Activated CD4-positive, alpha-beta memory T cell treated with anti-CD3 and anti-CD28 coated beads, Interleukin-2, amount 10 ng/mL, durations not matched to agents 7 days and 5 days (primary cell): ENCODE measurements at regions of chr19 and their contacts with region 1.

Region 1: DNA sequence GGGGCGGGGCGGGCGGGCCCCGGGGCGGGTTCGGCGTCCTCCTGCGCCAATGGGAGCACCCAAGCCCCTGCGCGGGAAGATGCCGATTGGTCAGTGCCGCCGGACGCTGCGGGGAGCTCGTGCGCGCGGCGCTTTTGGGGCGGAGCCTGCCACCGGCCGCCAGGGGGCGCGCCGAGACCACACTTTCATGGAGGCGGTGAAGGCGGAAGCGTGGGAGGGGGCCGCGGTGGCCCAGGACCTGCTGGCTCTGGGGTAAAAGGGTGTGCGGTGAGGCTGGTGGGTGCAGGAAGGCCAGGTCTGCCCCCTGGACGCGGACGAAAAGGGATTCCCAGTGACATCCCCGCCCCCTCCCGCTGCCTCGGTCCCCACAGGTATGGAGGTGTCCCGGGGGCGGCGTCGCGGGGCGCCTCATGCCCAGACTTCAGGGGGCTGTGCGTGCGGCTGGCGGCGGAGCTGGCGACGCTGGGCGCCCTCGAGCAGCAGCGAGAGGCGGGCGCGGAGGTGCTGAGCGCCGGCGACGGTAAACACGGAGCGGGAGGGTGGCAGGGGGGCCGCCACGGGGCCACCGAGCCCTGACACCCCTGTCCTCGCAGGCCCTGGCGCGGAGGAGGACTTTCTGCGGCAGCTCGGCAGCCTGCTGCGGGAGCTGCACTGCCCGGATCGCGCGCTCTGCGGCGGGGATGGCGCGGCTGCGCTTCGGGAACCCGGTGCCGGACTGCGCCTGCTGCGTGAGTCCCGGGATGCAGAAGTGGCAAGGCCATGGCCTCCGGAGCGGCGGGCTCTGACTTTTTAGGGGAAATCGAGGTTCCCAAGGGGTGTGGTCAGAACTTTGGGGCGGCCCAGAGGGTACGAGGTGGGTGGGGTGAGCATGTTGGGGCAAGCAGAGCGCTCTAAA is at the start of gene FAM98C:
- DNase-seq: peak; percentile 98
- H3K4me3 Mint-ChIP-seq: peak within 1 kb of the TSS; percentile 93
- H3K27ac Mint-ChIP-seq: peak within 1 kb of the TSS; percentile 92
- H3K4me1 Mint-ChIP-seq: peaks cover 26% of the 10 kb centered on the region
- H3K27me3 Mint-ChIP-seq: peaks cover 6% of the 10 kb centered on the region
- total RNA-seq, gene FAM98C: 34.7 to 36.5 TPM

Region 2: GRCh38 chr19:38304866-38305429 is 98.3 kb before region 1 on chr19:
- CTCF ChIA-PET with region 1: no interaction called
- POLR2A ChIA-PET with region 1: no interaction called
- DNase-seq: no peak
- H3K4me3 Mint-ChIP-seq: no peak overlapping the region
- H3K27ac Mint-ChIP-seq: no peak overlapping the region
- H3K4me1 Mint-ChIP-seq: peaks cover 4% of the 10 kb centered on the region
- H3K27me3 Mint-ChIP-seq: no peaks in the 10 kb centered on the region

Region 3: DNA sequence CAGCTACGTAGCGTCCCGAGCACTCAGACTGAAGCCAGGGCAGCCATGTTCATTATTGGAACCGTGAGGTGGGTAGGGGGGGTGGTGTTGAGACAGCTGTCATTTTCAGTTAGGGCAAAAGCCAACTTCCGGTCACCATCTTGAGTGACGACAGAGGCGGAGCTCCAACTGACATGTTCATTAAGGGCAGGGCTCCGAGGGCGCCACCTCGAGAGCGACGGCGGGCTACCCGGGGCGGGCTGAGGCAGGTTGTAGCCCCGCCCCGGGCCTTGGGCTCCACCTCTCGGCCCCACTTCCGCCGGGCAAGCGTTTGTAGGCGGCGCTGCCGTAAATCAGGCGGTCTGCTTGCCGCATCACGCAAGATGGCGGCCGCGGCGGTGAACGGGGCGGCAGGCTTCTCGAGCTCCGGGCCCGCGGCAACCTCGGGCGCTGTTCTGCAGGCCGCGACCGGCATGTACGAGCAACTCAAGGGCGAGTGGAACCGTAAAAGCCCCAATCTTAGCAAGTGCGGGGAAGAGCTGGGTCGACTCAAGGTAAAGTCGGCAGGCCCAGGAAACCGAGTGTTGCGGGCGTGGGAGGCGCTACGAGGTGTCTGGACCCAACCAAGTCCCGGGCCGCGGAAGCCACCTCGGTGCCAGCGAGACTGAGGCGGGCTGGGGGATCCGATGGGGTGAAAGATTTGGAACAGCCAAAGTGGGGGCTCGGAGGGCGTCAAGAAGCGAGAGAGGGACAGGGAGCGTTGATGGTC is 28.6 kb before region 1 on chr19 and contains the start of gene PSMD8:
- CTCF ChIA-PET with region 1: interaction called, 32 read pairs
- POLR2A ChIA-PET with region 1: interaction called, 31 read pairs
- DNase-seq: peak; percentile 99
- H3K4me3 Mint-ChIP-seq: peak within 1 kb of the TSS; percentile 97
- H3K27ac Mint-ChIP-seq: peak within 1 kb of the TSS; percentile 92
- H3K4me1 Mint-ChIP-seq: peaks cover 30% of the 10 kb centered on the region
- H3K27me3 Mint-ChIP-seq: peaks cover 9% of the 10 kb centered on the region
- total RNA-seq, gene PSMD8: 167 to 178 TPM

Region 4: DNA sequence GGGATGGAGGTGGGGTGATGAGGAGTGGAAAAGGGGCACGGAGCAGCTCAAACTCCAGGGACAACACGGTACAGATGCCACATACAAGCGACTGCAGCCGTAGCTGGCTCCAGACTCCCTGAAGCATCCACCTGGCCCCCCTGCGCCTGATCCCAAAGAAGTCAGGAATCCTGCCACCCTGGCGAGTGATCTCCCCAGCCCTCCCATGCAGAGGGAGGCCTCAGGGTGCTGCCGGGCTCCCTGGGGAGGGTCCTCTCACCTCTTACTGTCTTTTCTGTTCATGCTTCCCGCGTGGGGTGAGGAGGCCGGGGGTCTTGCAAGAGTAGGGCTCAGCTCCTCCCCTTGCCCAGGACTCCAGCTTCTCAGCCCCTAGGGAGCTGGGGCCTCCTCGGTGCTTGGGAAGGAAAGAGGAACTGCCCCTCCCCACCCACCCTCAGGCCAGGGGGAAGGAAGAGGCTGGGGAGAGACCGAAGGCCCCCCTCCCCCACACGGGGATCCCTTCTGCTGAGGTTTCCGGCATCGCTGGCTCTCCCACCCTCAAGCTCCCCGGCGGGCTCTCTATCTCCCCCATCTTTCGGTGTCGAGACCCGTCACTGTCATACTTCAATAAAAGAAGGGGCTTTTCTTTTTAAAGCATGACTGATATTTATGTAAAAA is 22.7 kb after region 1 on chr19 and contains the start of gene RASGRP4:
- CTCF ChIA-PET with region 1: interaction called, 16 read pairs
- POLR2A ChIA-PET with region 1: interaction called, 35 read pairs
- DNase-seq: peak; percentile 61
- H3K4me3 Mint-ChIP-seq: peak within 1 kb of the TSS; percentile 78
- H3K27ac Mint-ChIP-seq: peak within 1 kb of the TSS; percentile 88
- H3K4me1 Mint-ChIP-seq: peaks cover 39% of the 10 kb centered on the region
- H3K27me3 Mint-ChIP-seq: no peaks in the 10 kb centered on the region
- total RNA-seq, gene RASGRP4: 19.5 to 20.0 TPM

Region 5: GRCh38 chr19:38452428-38453366 is 49.5 kb after region 1 on chr19:
- CTCF ChIA-PET with region 1: no interaction called
- POLR2A ChIA-PET with region 1: no interaction called
- DNase-seq: peak; percentile 21
- H3K4me3 Mint-ChIP-seq: no peak overlapping the region
- H3K27ac Mint-ChIP-seq: no peak overlapping the region
- H3K4me1 Mint-ChIP-seq: no peaks in the 10 kb centered on the region
- H3K27me3 Mint-ChIP-seq: peaks cover 3% of the 10 kb centered on the region

Region 6: GRCh38 chr19:38514812-38515633 is 111.8 kb after region 1 on chr19:
- CTCF ChIA-PET with region 1: interaction called, 60 read pairs
- POLR2A ChIA-PET with region 1: interaction called, 11 read pairs
- DNase-seq: peak; percentile 80
- H3K4me3 Mint-ChIP-seq: no peak overlapping the region
- H3K27ac Mint-ChIP-seq: peak overlapping the region; percentile 31
- H3K4me1 Mint-ChIP-seq: peaks cover 31% of the 10 kb centered on the region
- H3K27me3 Mint-ChIP-seq: peaks cover 4% of the 10 kb centered on the region

Region 7: DNA sequence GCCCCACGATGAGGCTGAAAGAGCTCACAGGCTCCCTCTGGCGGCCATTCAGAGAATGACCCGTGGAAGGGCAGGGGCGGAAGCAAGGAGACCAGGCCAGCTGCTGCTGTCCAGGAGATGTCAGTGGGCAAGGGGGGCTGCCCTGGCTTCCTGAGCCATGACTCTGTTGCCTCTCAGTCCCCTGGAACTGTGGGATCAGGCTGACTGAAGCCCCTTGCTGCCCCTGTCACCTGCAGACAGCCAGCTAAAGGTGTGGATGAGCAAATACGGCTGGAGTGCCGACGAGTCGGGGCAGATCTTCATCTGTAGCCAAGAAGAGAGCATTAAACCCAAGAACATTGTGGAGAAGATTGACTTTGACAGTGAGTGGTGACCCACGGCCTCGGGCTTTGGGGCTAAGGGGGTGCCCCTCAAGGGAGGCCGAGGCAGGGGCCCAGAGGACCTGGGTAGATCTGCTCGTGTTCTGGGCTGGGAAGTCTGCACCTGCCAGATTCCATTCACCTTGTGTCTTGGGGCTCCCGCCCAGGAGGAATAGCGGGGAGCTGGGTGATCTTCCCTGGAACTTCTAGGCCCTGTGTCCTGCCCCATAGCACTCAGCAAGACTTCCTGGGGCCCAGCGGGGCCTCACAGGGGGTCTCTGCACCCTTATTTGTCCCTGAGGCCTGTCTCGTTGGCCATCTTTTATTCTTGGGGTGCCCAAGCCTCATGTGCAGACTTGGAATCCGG is 231.7 kb after region 1 on chr19:
- CTCF ChIA-PET with region 1: interaction called, 54 read pairs
- POLR2A ChIA-PET with region 1: interaction called, 11 read pairs
- DNase-seq: peak; percentile 81
- H3K4me3 Mint-ChIP-seq: no peak overlapping the region
- H3K27ac Mint-ChIP-seq: peak overlapping the region; percentile 87
- H3K4me1 Mint-ChIP-seq: peaks cover 50% of the 10 kb centered on the region
- H3K27me3 Mint-ChIP-seq: no peaks in the 10 kb centered on the region

Region 8: GRCh38 chr19:38891771-38892170 is 488.6 kb after region 1 on chr19:
- CTCF ChIA-PET with region 1: interaction called, 14 read pairs
- POLR2A ChIA-PET with region 1: no interaction called
- DNase-seq: no peak
- H3K4me3 Mint-ChIP-seq: no peak overlapping the region
- H3K27ac Mint-ChIP-seq: no peak overlapping the region
- H3K4me1 Mint-ChIP-seq: peaks cover 3% of the 10 kb centered on the region
- H3K27me3 Mint-ChIP-seq: no peaks in the 10 kb centered on the region